GM12878 (cell line): ENCODE measurements at regions of chr16 and their contacts with region 1.

Region 1: GRCh38 chr16:1782352-1783091 is at the starts of genes NUBP2 and SPSB3:
- DNase-seq: peak; percentile 100
- ATAC-seq: peak; percentile 96
- H3K4me3 ChIP-seq: peak within 1 kb of the TSS; percentile 94
- H3K27ac ChIP-seq: peak within 1 kb of the TSS; percentile 68
- H3K4me1 ChIP-seq: peaks cover 6% of the 10 kb centered on the region; the same call in 1 of the 2 replicates
- H3K27me3 ChIP-seq: no peaks in the 10 kb centered on the region
- CTCF ChIP-seq: no peak
- EP300 ChIP-seq: no peak
- POLR2A ChIP-seq: peak; percentile 81
- RAD21 ChIP-seq: no peak
- polyA plus RNA-seq, gene NUBP2: 1.9 to 5.9 TPM
- polyA plus RNA-seq, gene SPSB3: 0.31 to 1.5 TPM

Region 2: DNA sequence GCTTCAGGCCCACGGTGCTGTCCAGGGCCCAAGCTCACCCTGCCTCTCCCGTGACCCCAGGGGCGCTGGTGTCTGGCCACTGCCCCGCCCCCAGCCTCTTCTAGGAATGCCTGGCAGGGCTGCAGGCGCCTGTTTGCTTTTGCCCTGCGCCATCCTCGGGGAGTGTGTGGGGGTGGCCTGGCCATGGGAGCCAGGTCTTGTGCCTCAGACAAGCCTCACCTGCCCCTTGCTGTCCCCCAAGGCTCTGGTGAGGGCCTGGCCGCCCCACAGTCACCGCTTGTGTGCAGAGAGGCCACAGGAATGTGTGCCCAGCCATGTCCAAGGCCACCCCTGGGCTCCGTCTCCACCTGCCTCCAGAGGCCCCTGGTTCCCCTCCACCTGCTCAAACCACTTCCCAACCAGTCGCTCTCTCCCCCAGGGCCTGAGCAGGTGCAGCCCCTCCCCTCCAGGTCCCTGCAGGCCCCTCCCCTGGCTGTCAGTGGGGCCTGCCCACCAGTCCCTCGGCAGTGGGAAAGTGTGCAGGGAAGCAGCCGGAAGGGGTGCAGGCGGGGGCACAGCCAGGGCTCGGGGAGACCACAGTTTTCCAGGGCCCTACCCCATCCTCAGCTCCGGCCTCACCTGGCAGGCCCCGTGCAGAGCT is 11.8 kb after region 1 on chr16:
- CTCF ChIA-PET with region 1: no interaction called
- POLR2A ChIA-PET with region 1: no interaction called
- RAD21 ChIA-PET with region 1: no interaction called
- SMC1A ChIA-PET with region 1: no interaction called
- in situ Hi-C with region 1: no loop called
- intact Hi-C with region 1: no loop called
- DNase-seq: no peak
- ATAC-seq: no peak
- H3K4me3 ChIP-seq: no peak overlapping the region
- H3K27ac ChIP-seq: no peak overlapping the region
- H3K4me1 ChIP-seq: no peaks in the 10 kb centered on the region
- H3K27me3 ChIP-seq: no peaks in the 10 kb centered on the region
- CTCF ChIP-seq: no peak
- EP300 ChIP-seq: no peak
- POLR2A ChIP-seq: no peak
- RAD21 ChIP-seq: no peak

Region 3: DNA sequence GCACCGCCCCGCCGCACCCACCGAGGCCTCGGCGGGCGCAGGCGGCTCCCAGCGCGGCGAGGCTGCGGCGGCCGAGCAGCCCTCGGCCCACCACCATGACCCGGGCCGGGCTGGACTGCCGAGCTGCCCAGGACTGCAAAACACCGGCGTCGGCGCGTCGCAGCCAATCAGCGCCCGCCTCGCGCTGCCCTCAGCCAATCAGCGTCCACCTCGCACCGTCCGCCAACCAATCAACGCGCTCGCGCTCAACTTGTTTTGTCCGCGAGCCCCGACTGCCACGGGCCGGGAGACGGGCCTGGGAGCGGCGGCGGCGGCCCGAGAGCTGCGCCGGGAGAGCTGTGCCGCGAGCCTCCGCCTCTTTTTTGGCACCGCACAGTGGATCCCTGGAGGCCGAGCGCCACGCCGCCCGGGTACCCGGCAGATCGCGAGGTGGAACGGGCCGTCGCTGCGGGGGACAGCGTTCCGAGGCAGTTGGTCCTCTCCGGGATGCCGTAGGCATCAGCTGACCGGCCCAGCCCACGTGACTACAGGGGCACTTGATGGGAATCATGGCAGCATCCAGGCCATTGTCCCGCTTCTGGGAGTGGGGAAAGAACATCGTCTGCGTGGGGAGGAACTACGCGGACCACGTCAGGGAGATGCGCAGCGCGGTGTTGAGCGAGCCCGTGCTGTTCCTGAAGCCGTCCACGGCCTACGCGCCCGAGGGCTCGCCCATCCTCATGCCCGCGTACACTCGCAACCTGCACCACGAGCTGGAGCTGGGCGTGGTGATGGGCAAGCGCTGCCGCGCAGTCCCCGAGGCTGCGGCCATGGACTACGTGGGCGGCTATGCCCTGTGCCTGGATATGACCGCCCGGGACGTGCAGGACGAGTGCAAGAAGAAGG is 44.4 kb after region 1 on chr16 and contains the starts of genes FAHD1 and HAGH:
- CTCF ChIA-PET with region 1: interaction called, 4 read pairs
- POLR2A ChIA-PET with region 1: interaction called, 8 read pairs
- RAD21 ChIA-PET with region 1: interaction called, 6 read pairs
- SMC1A ChIA-PET with region 1: interaction called, 3 read pairs
- in situ Hi-C with region 1: no loop called
- intact Hi-C with region 1: loop called (anchors 2 kb)
- DNase-seq: peak; percentile 66
- ATAC-seq: peak; percentile 96
- H3K4me3 ChIP-seq: peak within 1 kb of the TSS; percentile 82
- H3K27ac ChIP-seq: peak within 1 kb of the TSS; percentile 38
- H3K4me1 ChIP-seq: peaks cover 4% of the 10 kb centered on the region; the same call in 1 of the 2 replicates
- H3K27me3 ChIP-seq: no peaks in the 10 kb centered on the region
- CTCF ChIP-seq: no peak
- EP300 ChIP-seq: no peak
- POLR2A ChIP-seq: peak; percentile 84
- RAD21 ChIP-seq: no peak
- polyA plus RNA-seq, gene FAHD1: 4.3 to 10.0 TPM
- polyA plus RNA-seq, gene HAGH: 2.0 to 2.3 TPM